Adrenal gland (tissue), 19 donors: ENCODE measurements at regions of chr6 and their contacts with region 1.

Region 1: DNA sequence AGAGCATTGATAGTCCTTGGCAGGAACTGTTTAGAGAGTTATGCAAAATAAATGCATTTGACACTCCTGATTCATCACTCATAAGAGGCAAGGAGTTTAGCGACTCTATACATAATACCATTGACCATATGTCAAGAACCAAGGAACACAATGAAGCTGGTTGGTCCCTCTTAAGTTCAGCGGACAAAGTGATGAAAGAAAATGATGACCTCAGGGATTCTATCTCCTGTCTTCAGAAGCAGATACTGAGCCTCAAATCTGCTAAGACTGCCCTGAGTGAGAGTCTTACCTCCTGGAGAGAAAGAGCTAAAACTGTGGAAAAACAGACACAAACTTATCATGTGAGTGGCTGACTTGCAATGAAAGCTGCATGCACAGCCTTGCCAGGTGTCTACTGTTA is 9.5 kb upstream of the NKAIN2 start:
- DNase-seq: no peak
- H3K4me3 ChIP-seq: no peak overlapping the region
- H3K27ac ChIP-seq: no peak overlapping the region
- H3K4me1 ChIP-seq: no peaks in the 10 kb centered on the region
- H3K27me3 ChIP-seq: peaks cover 3% of the 10 kb centered on the region
- CTCF ChIP-seq: no peak
- POLR2A ChIP-seq: no peak

Region 2: DNA sequence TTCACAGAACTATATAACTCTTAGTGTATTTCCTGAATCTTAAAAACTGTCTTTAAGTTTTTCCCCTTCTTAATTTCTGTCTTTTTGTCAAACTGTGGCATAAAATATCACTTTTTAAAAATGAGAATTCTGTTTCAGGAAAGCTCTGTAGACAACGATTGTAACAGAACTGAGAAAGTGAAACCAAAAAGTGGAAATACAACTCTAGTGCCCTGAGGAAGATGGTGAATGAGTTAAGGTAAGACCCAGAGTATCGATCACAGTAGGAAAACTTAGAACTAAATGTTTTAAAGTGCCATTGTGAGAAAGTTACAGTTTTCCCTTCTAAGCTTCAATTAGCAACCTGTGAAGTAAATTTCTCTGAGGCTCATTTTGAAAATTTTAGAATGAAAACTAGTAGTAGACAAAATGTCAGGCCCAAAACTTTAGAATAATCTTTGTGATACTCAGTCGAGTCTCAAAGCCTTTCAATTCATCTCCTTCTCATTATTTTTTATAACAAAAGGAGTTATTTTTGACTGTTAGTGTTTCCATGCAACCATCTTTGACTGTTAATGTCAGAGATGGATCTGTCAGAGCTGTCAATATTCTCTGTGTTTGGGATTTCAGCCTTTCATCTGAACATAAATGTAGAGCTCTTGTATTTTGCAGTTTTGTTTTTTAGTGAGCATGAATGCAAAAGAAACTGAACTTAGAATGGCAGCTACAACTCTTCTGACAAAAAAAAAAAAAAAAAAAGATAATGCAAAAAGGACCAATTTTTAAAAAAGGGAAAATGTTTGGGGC is 138.5 kb before region 1 on chr6:
- intact Hi-C with region 1: no loop called
- DNase-seq: no peak
- H3K4me3 ChIP-seq: peak overlapping the region in 1 of 4 donors; percentile 53
- H3K27ac ChIP-seq: peak overlapping the region in 2 of 5 donors; percentile 4 to 17
- H3K4me1 ChIP-seq: peaks cover 0 to 5% of the 10 kb centered on the region in 2 donors
- H3K27me3 ChIP-seq: no peaks in the 10 kb centered on the region
- CTCF ChIP-seq: no peak
- POLR2A ChIP-seq: no peak

Region 3: GRCh38 chr6:124854338-124854922 is 1060.2 kb after region 1 on chr6:
- intact Hi-C with region 1: loop called in 1 of 2 experiments (anchors 10 kb)
- DNase-seq: no peak
- H3K4me3 ChIP-seq: no peak overlapping the region
- H3K27ac ChIP-seq: no peak overlapping the region
- H3K4me1 ChIP-seq: no peaks in the 10 kb centered on the region
- H3K27me3 ChIP-seq: no peaks in the 10 kb centered on the region
- CTCF ChIP-seq: peak in 4 of 6 experiments; percentile 19 to 42 (median 30)
- POLR2A ChIP-seq: no peak